OCI-LY7 (cell line): ENCODE measurements at regions of chr2 and their contacts with region 1.

Region 1: DNA sequence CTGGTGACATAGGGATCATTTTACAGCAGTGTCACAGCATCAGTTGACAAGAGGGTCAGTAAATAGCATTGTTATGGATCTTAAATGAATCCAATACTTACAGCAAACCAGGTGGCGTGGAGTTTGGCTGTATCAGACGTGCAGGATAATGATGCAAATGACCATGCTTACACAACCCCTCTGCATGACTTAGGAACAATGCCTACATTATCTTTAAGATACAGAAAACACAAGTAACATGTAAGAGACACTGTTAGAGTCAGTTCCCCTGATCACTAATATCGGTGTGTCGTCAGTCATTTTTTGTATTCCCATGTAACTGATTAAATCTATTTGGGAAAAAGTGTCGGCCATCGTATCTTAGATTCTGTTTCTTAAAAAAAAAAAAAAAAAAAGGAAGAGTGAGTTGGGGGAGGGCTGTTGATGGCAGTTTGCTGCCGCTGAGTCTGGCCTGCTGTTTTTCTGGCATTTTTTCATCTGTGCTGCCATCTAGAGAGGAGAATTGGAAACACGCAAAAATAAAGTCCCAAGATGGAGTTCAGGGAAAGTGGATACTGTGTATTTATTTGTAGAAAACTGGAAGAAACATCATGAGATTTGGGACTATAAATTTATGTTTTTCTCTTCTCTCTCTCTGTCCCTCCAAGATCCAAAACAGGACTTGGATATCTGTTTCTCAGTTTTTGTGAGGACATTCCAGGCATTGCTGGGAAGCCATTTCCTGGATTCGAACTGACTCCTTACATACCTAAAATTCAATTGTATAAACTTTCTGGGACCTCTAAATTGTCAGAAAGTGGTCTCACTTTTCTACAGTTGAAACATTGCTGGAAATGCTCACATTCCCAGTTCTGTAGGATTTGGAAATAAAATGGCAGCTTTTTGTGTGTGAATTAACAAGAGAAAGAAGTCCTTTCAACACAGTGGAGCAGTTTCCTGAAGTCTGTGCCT is 60.3 kb upstream of the AGPS start:
- DNase-seq: peak; percentile 74
- H3K4me3 ChIP-seq: no peak overlapping the region
- H3K27ac ChIP-seq: no peak overlapping the region
- H3K4me1 ChIP-seq: peaks cover 8% of the 10 kb centered on the region
- CTCF ChIP-seq: peak; percentile 86

Region 2: GRCh38 chr2:177419274-177419673 is 87.0 kb after region 1 on chr2:
- CTCF ChIA-PET with region 1: no interaction called
- POLR2A ChIA-PET with region 1: interaction called, 5 read pairs
- intact Hi-C with region 1: loop called (anchors 1 kb)
- DNase-seq: no peak
- H3K4me3 ChIP-seq: no peak overlapping the region
- H3K27ac ChIP-seq: no peak overlapping the region
- H3K4me1 ChIP-seq: no peaks in the 10 kb centered on the region
- CTCF ChIP-seq: no peak

Region 3: DNA sequence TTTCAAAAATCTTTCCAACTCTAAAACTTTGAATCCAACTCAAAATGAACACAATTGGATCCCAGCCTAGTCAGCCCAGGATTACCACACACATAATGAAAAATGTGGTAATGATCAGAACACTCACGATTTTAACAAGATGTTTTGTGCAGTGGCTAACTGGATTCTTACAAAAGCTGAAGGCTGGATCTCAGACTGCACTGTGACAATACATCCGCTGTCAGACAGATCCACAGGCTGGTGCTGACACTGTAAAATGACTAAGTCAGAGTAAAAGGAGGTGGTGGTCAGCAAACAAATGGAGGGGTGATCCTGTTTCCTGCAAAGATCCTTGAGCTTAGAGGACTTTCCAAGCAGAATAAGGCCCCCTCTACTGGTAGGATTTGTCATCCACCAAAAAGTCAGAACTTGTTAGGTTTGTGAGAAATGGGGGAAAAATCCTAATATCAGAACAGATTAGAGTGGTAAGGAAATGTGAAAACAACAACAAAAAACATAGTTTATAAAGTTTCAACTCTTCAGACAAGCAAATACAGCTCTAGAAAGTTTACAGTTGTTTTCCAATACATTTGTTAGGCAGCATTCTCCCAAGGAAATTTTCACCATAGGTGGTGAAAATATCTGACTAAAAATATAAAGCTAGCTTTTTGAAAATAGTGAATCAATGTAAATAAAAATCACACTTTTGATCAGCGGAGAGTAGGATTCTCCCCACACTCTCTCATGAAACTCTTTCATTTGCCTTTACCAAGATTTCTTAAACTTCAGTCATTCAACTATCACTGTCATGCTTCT is 272.2 kb after region 1 on chr2:
- CTCF ChIA-PET with region 1: no interaction called
- POLR2A ChIA-PET with region 1: interaction called, 3 read pairs
- intact Hi-C with region 1: loop called (anchors 10 kb)
- DNase-seq: peak; percentile 35
- H3K4me3 ChIP-seq: no peak overlapping the region
- H3K27ac ChIP-seq: no peak overlapping the region
- H3K4me1 ChIP-seq: no peaks in the 10 kb centered on the region
- CTCF ChIP-seq: peak; percentile 84

Region 4: DNA sequence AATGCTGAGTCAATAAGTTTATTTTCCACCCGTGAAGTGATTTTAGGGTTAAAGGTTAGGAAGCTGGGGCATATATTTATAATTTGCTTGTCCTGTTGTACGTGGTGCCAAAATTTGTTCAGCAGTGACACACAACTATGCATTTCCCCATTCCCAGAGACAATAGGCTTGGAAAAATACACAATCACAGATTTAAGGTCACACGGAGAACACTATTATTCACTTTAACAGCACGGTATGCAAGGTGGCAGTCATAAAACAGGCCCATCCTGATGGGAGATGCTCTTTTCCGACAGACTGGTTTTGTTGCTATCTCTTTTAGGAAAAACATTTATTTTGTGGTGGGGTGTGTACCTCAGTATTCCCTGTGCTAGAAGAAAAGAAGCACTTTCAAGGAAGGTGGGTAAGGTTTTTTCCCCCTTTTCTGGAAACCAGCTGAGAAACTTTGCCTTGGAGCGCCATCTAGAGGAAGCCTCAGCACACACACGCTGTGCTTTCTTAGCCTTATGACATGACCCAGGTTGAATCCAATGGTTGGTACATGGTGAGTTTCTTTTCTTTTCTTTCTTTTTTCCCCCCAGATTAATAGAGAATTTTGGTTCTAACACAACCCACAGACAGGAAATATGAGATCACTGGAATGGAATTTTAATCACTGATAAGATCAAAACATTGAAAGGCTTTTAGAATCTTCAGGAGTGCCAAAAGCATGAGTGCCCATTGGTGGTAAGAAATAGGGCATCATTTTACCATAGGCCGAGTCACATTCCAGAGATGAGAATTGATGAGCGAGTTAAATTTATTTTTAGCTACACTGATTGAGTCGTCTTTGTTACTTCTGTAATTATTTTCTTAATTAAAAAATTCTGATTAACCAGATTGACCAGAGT is 392.3 kb after region 1 on chr2:
- CTCF ChIA-PET with region 1: no interaction called
- POLR2A ChIA-PET with region 1: interaction called, 4 read pairs
- intact Hi-C with region 1: loop called (anchors 1 kb)
- DNase-seq: peak; percentile 58
- H3K4me3 ChIP-seq: no peak overlapping the region
- H3K27ac ChIP-seq: no peak overlapping the region
- H3K4me1 ChIP-seq: no peaks in the 10 kb centered on the region
- CTCF ChIP-seq: peak; percentile 97